ENCODE measurements at regions of chr3 and their contacts with region 1.

Region 1: DNA sequence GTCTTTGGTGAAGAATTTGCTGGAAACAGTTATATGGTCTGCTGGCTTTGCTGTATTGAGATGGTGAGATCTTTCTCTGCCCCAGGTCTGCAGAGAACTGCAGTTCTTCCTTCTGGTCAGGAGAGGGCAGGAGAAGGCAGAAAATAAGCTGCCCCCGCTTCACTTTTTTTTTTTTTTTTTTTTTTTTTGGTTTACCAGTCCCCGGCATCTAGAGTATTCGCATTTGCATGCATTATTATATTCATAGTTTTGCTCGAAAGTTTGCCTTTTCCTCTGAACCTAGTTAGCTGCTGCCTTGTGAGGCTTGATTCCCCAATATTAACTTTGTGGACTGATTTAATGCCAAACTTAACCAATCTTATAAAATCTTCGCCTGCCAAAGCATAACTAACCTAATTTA is 10.6 kb upstream of the PARL start:
- DNase-seq: peak; percentile 43
- H3K4me3 ChIP-seq: no peak overlapping the region
- H3K27ac ChIP-seq: no peak overlapping the region
- H3K4me1 ChIP-seq: no peaks in the 10 kb centered on the region
- H3K27me3 ChIP-seq: peaks cover 6 to 13% of the 10 kb centered on the region in 2 experiments
- CTCF ChIP-seq: peak; percentile 75 to 78
- POLR2A ChIP-seq: no peak

Region 2: GRCh38 chr3:183917776-183918175 is 22.5 kb after region 1 on chr3:
- CTCF ChIA-PET with region 1: interaction called, 10 read pairs
- POLR2A ChIA-PET with region 1: no interaction called
- dilution Hi-C with region 1: no loop called
- intact Hi-C with region 1: no loop called
- DNase-seq: no peak
- H3K4me3 ChIP-seq: no peak overlapping the region
- H3K27ac ChIP-seq: no peak overlapping the region
- H3K4me1 ChIP-seq: no peaks in the 10 kb centered on the region
- H3K27me3 ChIP-seq: no peaks in the 10 kb centered on the region
- CTCF ChIP-seq: no peak
- POLR2A ChIP-seq: no peak

Region 3: DNA sequence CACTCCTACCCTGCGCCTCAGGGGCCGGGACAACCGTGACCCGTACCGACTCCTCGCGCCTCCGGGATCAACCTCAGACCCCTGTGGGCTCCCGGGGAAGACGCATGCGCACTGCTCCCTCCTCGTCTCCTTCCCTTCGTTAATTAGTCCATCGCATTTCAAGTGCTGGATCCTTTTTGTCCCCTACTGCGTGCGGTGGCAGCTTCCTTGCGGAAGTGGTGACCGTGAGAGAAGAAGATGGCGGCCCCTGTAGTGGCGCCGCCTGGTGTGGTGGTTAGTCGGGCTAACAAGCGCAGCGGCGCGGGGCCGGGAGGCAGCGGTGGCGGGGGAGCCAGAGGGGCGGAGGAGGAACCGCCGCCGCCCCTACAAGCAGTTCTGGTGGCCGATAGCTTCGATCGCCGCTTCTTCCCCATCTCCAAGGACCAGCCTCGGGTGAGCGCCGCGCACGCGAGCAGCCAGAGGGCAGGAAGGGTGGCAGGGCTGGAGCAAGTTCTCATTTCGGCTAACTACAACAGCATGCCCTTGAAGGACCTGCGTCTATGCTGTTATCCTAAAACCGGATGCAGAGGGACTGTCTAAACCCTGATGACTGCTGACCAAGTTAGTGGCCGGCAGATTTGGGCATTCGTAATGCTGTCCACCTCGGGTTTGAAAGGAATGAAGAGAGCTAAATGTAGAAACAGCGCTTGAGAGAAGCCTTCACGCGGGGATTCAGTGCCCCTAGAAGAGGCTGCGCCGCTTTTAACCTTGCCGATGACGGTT is 240.0 kb after region 1 on chr3 and contains the start of gene EIF2B5:
- CTCF ChIA-PET with region 1: interaction called, 12 read pairs
- POLR2A ChIA-PET with region 1: no interaction called
- dilution Hi-C with region 1: no loop called
- intact Hi-C with region 1: loop called (anchors 1 kb)
- DNase-seq: peak; percentile 96
- H3K4me3 ChIP-seq: peak within 1 kb of the TSS; percentile 67 to 92 (median 90)
- H3K27ac ChIP-seq: peak within 1 kb of the TSS; percentile 56
- H3K4me1 ChIP-seq: peaks cover 27% of the 10 kb centered on the region
- H3K27me3 ChIP-seq: no peaks in the 10 kb centered on the region
- CTCF ChIP-seq: peak; percentile 26 to 41
- POLR2A ChIP-seq: peak; percentile 77
- total RNA-seq, gene EIF2B5: 38.8 and 44.7 TPM in 2 replicates

Region 4: GRCh38 chr3:184185461-184186308 is 290.4 kb after region 1 on chr3 and contains the start of gene ABCF3:
- CTCF ChIA-PET with region 1: interaction called, 10 read pairs
- POLR2A ChIA-PET with region 1: no interaction called
- dilution Hi-C with region 1: no loop called
- intact Hi-C with region 1: loop called (anchors 2 kb)
- DNase-seq: peak; percentile 99
- H3K4me3 ChIP-seq: peak within 1 kb of the TSS; percentile 5 to 92 (median 54)
- H3K27ac ChIP-seq: peak within 1 kb of the TSS; percentile 64
- H3K4me1 ChIP-seq: peaks cover 14% of the 10 kb centered on the region
- H3K27me3 ChIP-seq: no peaks in the 10 kb centered on the region
- CTCF ChIP-seq: no peak
- POLR2A ChIP-seq: peak; percentile 87
- total RNA-seq, gene ABCF3: 65.6 and 68.8 TPM in 2 replicates

Region 5: DNA sequence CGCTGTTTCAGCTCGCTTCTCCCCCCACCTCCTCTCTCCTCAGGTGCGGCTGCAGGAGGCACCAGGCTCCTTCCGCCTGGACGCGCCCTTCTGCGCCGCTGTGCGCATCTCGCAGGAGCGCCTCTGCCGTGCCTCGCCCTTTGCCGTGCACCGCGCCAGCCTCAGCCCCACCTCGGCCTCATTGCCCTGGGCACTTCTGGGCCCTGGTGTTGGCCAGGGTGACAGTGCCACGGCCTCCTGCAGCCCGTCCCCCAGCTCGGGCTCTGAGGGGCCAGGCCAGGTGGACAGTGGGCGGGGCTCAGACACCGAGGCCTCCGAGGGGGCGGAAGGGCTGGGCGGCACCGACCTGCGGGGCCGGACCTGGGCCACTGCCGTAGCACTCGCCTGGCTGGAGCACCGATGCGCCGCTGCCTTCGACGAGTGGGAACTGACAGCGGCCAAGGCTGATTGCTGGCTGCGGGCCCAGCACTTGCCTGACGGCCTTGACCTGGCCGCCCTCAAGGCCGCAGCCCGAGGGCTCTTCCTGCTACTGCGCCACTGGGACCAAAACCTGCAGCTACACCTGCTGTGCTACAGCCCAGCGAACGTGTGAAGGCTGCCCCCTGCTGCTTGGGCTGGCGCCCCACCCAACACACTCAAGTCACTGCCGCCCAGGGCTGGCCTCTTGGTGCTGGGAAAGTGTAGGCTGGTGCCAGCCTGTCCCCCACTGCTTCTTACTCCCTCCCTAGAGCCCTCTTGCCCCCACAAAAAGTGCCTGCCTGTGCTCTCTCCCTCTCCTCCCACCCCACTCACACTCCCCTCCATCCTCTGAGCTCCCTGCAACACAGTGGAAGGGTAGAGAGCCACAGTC is 346.4 kb after region 1 on chr3:
- CTCF ChIA-PET with region 1: interaction called, 54 read pairs
- POLR2A ChIA-PET with region 1: no interaction called
- dilution Hi-C with region 1: no loop called
- intact Hi-C with region 1: no loop called
- DNase-seq: peak; percentile 48
- H3K4me3 ChIP-seq: no peak overlapping the region
- H3K27ac ChIP-seq: no peak overlapping the region
- H3K4me1 ChIP-seq: no peaks in the 10 kb centered on the region
- H3K27me3 ChIP-seq: no peaks in the 10 kb centered on the region
- CTCF ChIP-seq: peak; percentile 50 to 83
- POLR2A ChIP-seq: no peak

Region 6: DNA sequence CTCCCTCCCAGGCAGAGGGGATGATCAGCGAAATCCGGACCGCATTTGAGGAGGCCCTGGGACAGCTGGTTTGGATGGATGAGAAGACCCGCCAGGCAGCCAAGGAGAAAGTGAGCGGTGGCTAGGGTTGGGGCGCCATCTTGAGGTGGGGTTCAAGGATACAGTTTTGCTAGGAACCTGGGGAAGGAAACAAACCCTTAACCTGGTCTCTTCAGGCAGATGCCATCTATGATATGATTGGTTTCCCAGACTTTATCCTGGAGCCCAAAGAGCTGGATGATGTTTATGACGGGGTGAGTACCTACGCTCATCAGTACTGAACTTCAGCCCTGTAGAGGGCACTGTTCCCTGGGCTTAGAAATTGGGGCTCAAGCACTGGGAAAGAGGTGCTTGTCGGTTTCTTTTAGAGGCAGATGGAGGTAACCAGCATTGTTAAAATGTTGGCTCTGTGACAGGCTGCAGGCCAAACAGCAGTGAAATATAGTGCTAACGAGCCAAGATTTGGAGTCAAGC is 394.2 kb after region 1 on chr3:
- CTCF ChIA-PET with region 1: interaction called, 41 read pairs
- POLR2A ChIA-PET with region 1: no interaction called
- dilution Hi-C with region 1: no loop called
- intact Hi-C with region 1: loop called (anchors 1 kb)
- DNase-seq: peak; percentile 52
- H3K4me3 ChIP-seq: no peak overlapping the region
- H3K27ac ChIP-seq: no peak overlapping the region
- H3K4me1 ChIP-seq: no peaks in the 10 kb centered on the region
- H3K27me3 ChIP-seq: peaks cover 0 to 3% of the 10 kb centered on the region in 2 experiments
- CTCF ChIP-seq: peak; percentile 67
- POLR2A ChIP-seq: no peak

Measured in endothelial cell of umbilical vein (primary cell).